A673 (cell line): ENCODE measurements at regions of chr5 and their contacts with region 1.

Region 1: DNA sequence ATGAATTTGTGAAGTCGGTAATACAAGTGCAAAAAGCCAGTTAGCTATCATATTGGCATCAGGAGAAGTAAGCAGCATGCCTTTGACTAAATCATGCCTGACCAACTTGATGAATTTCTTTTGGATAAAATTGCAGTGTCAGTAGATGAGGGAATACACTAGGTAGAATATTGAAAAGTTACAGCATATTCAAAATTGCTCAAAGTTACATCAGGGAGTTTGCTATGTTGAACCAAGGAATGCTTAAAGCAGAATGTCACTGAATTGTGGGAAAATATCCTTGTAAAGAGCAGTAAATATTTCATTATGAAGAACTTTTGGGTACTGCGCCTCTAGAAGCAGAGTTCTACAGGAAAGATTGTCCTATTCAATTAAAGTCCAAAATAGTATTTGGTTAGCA is 87.1 kb upstream of the TLX3 start:
- DNase-seq: no peak
- H3K4me3 ChIP-seq: no peak overlapping the region
- H3K27ac ChIP-seq: no peak overlapping the region
- H3K4me1 ChIP-seq: no peaks in the 10 kb centered on the region
- H3K27me3 ChIP-seq: peaks cover 27% of the 10 kb centered on the region
- CTCF ChIP-seq: no peak

Region 2: DNA sequence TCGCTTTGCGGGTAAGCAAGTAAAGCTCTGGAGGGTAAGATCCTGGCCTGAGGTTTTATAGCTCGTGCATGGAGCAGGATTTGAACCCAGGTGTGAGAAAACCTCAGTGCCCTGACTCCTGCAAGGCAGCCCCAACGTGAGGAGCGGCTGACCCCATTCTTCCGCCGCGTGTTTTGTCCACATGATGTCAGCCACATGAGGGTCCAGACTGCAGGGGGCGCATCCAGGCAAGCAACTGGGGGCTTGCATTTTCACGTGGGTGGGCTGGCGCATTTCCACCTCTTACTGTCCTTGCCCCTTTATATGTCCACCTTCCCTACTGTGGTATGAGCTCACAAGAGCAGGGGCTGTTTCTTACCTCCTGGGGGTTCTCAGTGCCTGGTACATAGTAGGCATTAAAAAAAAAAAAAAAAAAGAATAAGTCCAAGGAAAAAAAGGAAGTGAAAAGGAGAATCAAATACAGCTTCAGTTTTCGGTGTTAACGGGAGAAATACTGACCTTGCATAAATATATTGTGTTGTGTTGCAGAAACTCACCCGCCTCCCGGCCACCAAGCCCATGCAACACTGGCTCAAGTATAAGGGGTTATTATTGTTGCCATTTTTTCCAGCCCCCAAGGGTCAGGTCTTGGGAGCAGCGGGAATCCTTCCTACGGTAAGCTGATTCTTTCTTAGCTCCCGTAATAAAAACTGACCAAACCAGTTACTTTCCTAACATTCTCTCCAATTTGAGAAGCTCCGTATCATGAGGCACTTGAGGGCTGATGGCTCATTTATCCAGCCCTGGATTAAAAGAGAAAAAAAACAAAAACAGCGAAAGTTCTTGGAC is 102.1 kb after region 1 on chr5:
- CTCF ChIA-PET with region 1: no interaction called
- POLR2A ChIA-PET with region 1: no interaction called
- intact Hi-C with region 1: loop called (anchors 5 kb)
- DNase-seq: no peak
- H3K4me3 ChIP-seq: no peak overlapping the region
- H3K27ac ChIP-seq: no peak overlapping the region
- H3K4me1 ChIP-seq: no peaks in the 10 kb centered on the region
- H3K27me3 ChIP-seq: peaks cover 85% of the 10 kb centered on the region
- CTCF ChIP-seq: no peak

Region 3: DNA sequence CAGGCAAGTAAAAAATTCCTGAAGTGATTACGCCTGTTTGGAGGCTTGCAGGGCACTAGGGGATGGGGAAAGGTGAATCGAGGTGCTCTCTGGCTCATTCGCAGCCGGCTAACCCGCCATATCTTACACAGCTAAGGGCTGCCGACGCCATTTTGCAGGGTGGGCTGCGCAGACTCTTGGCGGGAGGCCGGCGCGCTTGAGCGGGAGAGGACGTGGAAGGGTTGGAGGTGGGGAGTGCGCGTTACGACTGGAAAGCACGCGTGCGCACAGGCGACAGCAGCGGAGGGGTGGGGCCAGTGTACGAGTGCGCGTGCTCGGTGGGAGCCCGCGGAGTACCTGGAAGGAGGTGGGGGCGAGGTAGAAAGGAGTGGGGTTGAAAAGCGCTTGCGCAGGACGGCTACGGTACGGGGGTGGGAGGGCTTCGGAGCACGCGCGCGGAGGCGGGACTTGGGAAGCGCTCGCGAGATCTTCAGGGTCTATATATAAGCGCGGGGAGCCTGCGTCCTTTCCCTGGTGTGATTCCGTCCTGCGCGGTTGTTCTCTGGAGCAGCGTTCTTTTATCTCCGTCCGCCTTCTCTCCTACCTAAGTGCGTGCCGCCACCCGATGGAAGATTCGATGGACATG is 165.5 kb after region 1 on chr5 and contains the start of gene NPM1:
- CTCF ChIA-PET with region 1: no interaction called
- POLR2A ChIA-PET with region 1: no interaction called
- intact Hi-C with region 1: no loop called
- DNase-seq: peak; percentile 97
- H3K4me3 ChIP-seq: peak within 1 kb of the TSS; percentile 80
- H3K27ac ChIP-seq: peak within 1 kb of the TSS; percentile 97
- H3K4me1 ChIP-seq: peaks cover 9% of the 10 kb centered on the region
- H3K27me3 ChIP-seq: no peaks in the 10 kb centered on the region
- CTCF ChIP-seq: no peak
- total RNA-seq, gene NPM1: 1,854 and 1,998 TPM in 2 replicates